ENCODE measurements at regions of chr3 and their contacts with region 1.

Region 1: GRCh38 chr3:142578327-142579223 is at the start of gene ATR:
- DNase-seq: peak; percentile 91 to 98 (median 96)
- ATAC-seq: peak; percentile 93
- H3K4me3 ChIP-seq: peak within 1 kb of the TSS; percentile 95
- H3K4me3 Mint-ChIP-seq: peak within 1 kb of the TSS; percentile 99
- H3K27ac ChIP-seq: peak within 1 kb of the TSS; percentile 90 to 93
- H3K27ac Mint-ChIP-seq: peak within 1 kb of the TSS; percentile 97
- H3K4me1 ChIP-seq: peaks cover 15% of the 10 kb centered on the region
- H3K4me1 Mint-ChIP-seq: peaks cover 64% of the 10 kb centered on the region
- H3K27me3 ChIP-seq: no peaks in the 10 kb centered on the region
- H3K27me3 Mint-ChIP-seq: peaks cover 6% of the 10 kb centered on the region
- CTCF ChIP-seq: no peak
- total RNA-seq, gene ATR: 29.0 to 29.5 TPM

Region 2: DNA sequence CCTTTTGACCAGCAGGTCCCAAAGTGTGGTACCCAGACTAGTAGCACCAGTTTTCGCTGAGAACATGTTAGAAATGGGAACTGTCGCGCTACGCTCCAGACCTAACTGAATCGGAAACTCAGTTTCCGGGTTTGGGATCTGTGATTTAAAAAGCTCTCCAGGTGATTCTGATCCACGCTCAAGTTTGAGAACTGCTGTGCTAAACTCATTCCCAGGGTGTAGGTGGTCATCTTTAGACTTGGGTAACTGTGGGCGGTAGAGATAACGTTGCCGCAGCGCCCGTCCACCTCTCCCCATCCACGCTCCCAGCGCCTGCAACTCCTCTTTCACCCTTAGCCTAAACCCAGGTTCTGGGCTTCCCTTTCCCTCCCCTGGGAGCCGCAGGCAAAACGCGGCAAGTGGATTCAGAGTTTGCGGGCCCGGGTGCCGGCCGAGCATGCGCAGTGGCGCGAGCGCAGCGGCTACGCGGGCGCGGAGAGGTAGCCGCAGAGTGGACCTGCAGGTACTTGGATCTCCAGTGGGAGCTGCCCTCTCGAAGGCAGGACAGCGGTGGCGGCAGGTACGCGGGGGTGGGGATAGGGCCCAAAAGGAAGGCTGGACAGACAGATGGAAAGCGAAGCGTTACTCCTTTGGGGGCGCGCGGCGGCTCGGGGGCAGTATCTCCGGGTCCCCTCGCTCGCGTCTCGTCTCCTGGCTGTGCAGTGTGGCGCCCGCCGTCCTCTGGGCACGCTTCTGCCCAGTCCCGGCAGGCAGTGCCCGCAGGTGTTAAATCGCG is 17.6 kb after region 1 on chr3 and contains the start of gene PLS1:
- CTCF ChIA-PET with region 1: interaction called, 3 read pairs
- POLR2A ChIA-PET with region 1: interaction called, 59 read pairs
- intact Hi-C with region 1: loop called (anchors 1 to 2 kb)
- DNase-seq: peak; percentile 68 to 91 (median 82)
- ATAC-seq: peak; percentile 91
- H3K4me3 ChIP-seq: peak within 1 kb of the TSS; percentile 62
- H3K4me3 Mint-ChIP-seq: peak within 1 kb of the TSS; percentile 97
- H3K27ac ChIP-seq: no peak within 1 kb of the TSS
- H3K27ac Mint-ChIP-seq: peak within 1 kb of the TSS; percentile 53
- H3K4me1 ChIP-seq: peaks cover 13% of the 10 kb centered on the region
- H3K4me1 Mint-ChIP-seq: peaks cover 18% of the 10 kb centered on the region
- H3K27me3 ChIP-seq: no peaks in the 10 kb centered on the region
- H3K27me3 Mint-ChIP-seq: peaks cover 6% of the 10 kb centered on the region
- CTCF ChIP-seq: no peak
- total RNA-seq, gene PLS1: 0.63 to 0.92 TPM

Region 3: GRCh38 chr3:142645236-142645793 is 66.7 kb after region 1 on chr3:
- CTCF ChIA-PET with region 1: no interaction called
- POLR2A ChIA-PET with region 1: no interaction called
- intact Hi-C with region 1: no loop called
- DNase-seq: no peak
- ATAC-seq: no peak
- H3K4me3 ChIP-seq: no peak overlapping the region
- H3K4me3 Mint-ChIP-seq: no peak overlapping the region
- H3K27ac ChIP-seq: no peak overlapping the region
- H3K27ac Mint-ChIP-seq: no peak overlapping the region
- H3K4me1 ChIP-seq: no peaks in the 10 kb centered on the region
- H3K4me1 Mint-ChIP-seq: no peaks in the 10 kb centered on the region
- H3K27me3 ChIP-seq: no peaks in the 10 kb centered on the region
- H3K27me3 Mint-ChIP-seq: no peaks in the 10 kb centered on the region
- CTCF ChIP-seq: no peak

Region 4: GRCh38 chr3:142656575-142656974 is 78.0 kb after region 1 on chr3:
- CTCF ChIA-PET with region 1: no interaction called
- POLR2A ChIA-PET with region 1: no interaction called
- intact Hi-C with region 1: no loop called
- DNase-seq: no peak
- ATAC-seq: no peak
- H3K4me3 ChIP-seq: no peak overlapping the region
- H3K4me3 Mint-ChIP-seq: no peak overlapping the region
- H3K27ac ChIP-seq: no peak overlapping the region
- H3K27ac Mint-ChIP-seq: no peak overlapping the region
- H3K4me1 ChIP-seq: no peaks in the 10 kb centered on the region
- H3K4me1 Mint-ChIP-seq: no peaks in the 10 kb centered on the region
- H3K27me3 ChIP-seq: no peaks in the 10 kb centered on the region
- H3K27me3 Mint-ChIP-seq: no peaks in the 10 kb centered on the region
- CTCF ChIP-seq: no peak